Posterior vena cava (tissue), 2 donors: ENCODE measurements at regions of chr11 and their contacts with region 1.

Region 1: DNA sequence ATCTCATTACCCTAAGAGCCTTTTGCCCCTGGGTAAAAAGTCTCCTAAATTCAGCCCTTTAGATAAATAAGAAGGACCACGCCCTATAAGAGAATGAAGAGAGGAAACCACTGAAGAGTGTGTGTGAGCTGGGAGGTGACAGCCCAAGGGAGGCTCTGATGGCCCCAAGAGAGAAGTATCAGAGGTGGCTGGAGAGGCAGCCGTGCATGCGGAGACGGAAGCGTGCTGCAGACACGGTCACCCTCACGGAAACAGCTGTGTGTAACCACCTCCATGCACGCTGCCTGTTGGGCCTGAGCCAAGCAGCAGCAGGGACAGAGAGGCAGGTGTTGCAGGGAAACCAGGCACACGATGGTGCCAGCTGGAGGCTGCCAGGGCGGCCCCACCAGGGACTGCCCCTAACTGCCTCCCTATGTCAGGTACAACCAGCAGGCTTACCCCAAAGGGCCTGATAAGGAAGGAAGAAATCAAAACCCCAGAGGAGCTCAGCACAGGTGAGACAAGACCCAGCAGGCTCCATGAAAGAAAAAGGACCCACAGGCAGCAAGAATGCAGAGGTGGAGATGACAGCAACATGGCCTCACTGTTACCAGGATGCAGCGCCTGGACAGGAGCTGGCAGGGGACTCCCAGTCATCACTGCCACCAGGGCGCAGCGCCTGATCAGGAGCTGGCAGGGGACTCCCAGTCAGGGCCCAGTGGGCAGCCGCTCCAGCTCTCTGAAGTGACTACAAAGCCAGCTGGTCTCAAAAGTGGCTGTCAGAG is 7.8 kb downstream of the LARGE2 start:
- DNase-seq: peak; percentile 79

Region 2: GRCh38 chr11:45872513-45873356 is 57.5 kb before region 1 on chr11:
- intact Hi-C with region 1: loop called in 1 of 2 experiments (anchors 10 kb)
- DNase-seq: peak; percentile 77

Region 3: GRCh38 chr11:45949992-45950407 is 19.8 kb after region 1 on chr11:
- intact Hi-C with region 1: loop called in 1 of 2 experiments (anchors 2 kb)
- DNase-seq: no peak

Region 4: DNA sequence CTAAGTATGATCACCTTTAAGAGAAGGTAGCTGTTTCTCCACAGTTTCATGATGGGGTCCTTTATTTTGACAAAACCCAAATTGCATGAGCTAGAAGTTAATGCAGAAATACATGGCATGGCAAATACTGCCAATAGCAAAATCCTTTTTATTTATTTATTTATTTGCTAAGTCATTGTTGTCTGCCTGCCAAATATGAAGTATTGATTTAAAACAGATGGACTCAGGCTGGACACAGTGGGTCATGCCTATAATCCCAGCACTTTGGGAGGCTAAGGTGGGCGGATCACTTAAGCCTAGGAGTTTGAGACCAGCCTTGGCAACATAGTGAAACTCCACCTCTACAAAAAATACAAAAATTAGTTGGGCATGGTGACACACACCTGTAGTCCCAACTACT is 44.6 kb after region 1 on chr11:
- intact Hi-C with region 1: no loop called
- DNase-seq: no peak